ENCODE measurements at regions of chr7 and their contacts with region 1.

Region 1: DNA sequence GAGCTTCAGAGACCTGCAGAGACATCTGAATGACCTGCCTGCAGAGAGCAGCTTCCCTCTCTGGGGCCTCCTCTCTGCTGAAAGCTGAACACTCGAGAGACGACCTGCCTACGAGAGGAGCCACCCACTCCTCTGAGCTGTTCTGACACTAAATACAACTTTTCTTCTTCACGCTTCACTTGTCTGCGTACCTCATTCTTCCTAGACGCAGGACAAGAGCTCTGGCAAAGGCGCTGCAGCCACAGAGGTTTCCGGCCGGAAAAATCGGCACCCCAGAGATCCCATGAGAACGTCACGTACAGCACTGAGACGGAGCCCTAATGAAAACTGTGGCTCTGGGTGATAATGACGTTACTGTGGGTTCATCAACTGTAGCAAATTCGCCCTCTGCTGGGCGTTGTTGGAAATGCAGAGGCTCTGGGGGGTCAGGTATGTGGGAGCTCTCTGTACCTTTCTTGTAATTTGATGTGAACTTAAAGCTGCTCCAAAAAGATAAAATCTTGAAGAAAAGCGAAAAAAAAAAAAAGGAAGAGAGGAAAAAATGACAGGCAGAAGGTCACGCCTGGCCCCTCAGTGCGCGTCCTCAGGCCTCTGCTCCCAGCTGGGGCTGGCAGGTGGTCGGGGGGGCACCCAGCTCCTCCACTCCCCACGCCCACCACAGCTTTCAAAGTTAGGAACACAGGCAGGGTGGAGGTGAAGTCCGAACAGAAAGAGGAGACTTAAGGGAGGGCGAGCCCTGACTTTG is 120.7 kb downstream of the DYNC2I1 start:
- DNase-seq: peak; percentile 76 to 80
- ATAC-seq: peak; percentile 36 to 72 (median 58)
- H3K4me3 ChIP-seq: peak overlapping the region; percentile 42
- H3K27ac ChIP-seq: peak overlapping the region; percentile 41
- H3K4me1 ChIP-seq: peaks cover 6% of the 10 kb centered on the region
- H3K27me3 ChIP-seq: no peaks in the 10 kb centered on the region
- CTCF ChIP-seq: peak; percentile 81

Region 2: DNA sequence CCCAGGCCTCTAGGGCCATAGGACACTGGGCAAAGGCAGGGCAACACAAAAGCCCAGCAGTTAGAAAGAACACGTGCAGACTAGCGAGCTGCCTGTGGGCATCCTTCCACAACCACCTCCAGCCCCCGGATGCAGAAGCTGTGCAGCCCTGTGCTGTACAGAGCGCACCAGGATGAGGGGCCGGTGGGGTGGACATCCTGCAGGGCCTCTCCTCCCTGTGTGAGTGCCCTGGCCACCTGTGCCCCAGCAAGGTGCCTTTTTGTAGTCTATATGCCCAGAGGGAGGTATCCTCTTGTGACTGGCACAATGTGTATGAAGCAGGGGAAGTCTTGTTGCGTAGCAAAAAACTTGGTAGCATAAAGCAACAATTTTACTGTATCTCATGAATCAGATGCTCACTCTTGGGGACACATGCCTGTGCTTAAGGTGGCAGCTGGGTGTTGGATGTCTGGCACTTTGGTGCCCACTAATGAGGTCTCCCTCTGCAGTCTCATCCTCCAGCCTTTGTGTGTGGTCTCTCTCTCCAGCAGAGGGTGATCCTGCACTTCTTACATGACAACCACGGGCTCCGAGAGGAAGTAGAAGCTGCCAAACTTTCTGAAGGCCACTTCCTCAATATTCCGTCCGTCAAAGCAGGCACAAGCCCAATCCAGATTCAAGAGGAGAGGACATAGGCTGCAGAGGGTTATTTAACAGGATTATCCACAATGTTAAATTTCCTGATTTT is 281.1 kb before region 1 on chr7:
- intact Hi-C with region 1: loop called in 1 of 2 experiments (anchors 2 kb)
- DNase-seq: peak in 1 of 2 donors; percentile 35
- ATAC-seq: peak; percentile 76 to 89 (median 84)
- H3K4me3 ChIP-seq: peak overlapping the region; percentile 17
- H3K27ac ChIP-seq: peak overlapping the region; percentile 39
- H3K4me1 ChIP-seq: no peaks in the 10 kb centered on the region
- H3K27me3 ChIP-seq: no peaks in the 10 kb centered on the region
- CTCF ChIP-seq: peak; percentile 69

Region 3: GRCh38 chr7:158924956-158925355 is 52.1 kb before region 1 on chr7:
- intact Hi-C with region 1: no loop called
- DNase-seq: no peak
- ATAC-seq: no peak
- H3K4me3 ChIP-seq: no peak overlapping the region
- H3K27ac ChIP-seq: no peak overlapping the region
- H3K4me1 ChIP-seq: no peaks in the 10 kb centered on the region
- H3K27me3 ChIP-seq: no peaks in the 10 kb centered on the region
- CTCF ChIP-seq: no peak